Activated naive CD4-positive, alpha-beta T cell treated with anti-CD3 and anti-CD28 coated beads for 36 hours (primary cell): ENCODE measurements at regions of chr1 and their contacts with region 1.

Region 1: GRCh38 chr1:77533660-77534305 is 148.7 kb downstream of the ZZZ3 start:
- DNase-seq: peak; percentile 77
- H3K4me3 Mint-ChIP-seq: no peak overlapping the region
- H3K27ac Mint-ChIP-seq: peak overlapping the region; percentile 15
- H3K4me1 Mint-ChIP-seq: peaks cover 8% of the 10 kb centered on the region
- H3K27me3 Mint-ChIP-seq: no peaks in the 10 kb centered on the region

Region 2: DNA sequence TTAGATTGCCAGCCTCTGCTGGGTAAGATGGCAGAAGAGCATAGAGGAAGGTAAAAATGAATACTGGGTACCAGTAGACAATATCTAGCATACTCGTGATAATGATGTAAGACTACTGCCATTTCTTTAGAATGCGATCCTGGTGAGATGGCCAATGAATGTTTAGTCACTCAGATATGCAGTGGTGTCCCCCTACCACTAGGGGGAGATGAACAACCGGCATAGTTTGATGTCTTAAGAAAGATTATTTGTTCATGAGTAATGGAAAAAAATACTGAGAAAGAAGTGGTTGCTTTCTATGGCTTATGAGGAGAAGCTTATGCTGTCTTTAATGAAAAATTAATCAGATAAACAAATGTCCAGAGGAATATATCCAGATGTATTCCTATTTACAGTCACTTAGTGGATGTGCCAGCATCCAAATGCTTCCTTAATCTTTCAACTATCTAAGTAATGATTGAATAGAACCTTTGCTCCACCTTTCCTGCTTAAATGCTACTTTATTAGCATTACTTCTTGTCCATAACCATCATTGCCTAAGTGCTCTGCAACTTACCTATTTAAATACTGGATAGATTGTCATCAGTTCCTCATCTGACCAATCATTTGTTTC is 1202.7 kb before region 1 on chr1:
- CTCF ChIA-PET with region 1: no interaction called
- intact Hi-C with region 1: loop called (anchors 2 kb)
- DNase-seq: peak; percentile 68
- H3K4me3 Mint-ChIP-seq: no peak overlapping the region
- H3K27ac Mint-ChIP-seq: no peak overlapping the region
- H3K4me1 Mint-ChIP-seq: peaks cover 14% of the 10 kb centered on the region
- H3K27me3 Mint-ChIP-seq: no peaks in the 10 kb centered on the region

Region 3: GRCh38 chr1:77143529-77144121 is 390.2 kb before region 1 on chr1:
- CTCF ChIA-PET with region 1: interaction called, 7 read pairs
- intact Hi-C with region 1: loop called (anchors 1 kb)
- DNase-seq: no peak
- H3K4me3 Mint-ChIP-seq: no peak overlapping the region
- H3K27ac Mint-ChIP-seq: no peak overlapping the region
- H3K4me1 Mint-ChIP-seq: peaks cover 2% of the 10 kb centered on the region
- H3K27me3 Mint-ChIP-seq: no peaks in the 10 kb centered on the region

Region 4: GRCh38 chr1:77238462-77238861 is 295.3 kb before region 1 on chr1:
- CTCF ChIA-PET with region 1: interaction called, 12 read pairs
- intact Hi-C with region 1: no loop called
- DNase-seq: no peak
- H3K4me3 Mint-ChIP-seq: no peak overlapping the region
- H3K27ac Mint-ChIP-seq: no peak overlapping the region
- H3K4me1 Mint-ChIP-seq: peaks cover 5% of the 10 kb centered on the region
- H3K27me3 Mint-ChIP-seq: no peaks in the 10 kb centered on the region

Region 5: DNA sequence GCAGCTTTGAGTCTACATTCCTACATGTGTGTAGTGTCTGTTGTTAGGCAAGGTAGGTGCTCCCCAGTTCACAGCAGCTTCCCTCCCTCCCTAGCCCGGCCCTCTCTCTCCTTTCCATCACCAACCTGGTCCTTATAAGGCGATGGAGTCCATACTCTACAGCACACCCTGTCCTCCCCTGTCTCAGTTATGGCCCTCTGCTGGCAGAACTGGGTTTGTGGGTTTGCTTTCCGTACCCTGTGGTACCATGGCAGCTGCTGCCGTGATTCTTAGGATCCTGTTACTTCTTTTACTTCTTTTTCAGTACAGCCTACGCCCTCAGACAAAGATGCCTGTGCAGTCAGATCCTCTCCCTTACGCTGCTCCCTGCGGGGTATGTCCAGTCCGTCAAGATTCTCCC is 220.3 kb before region 1 on chr1:
- CTCF ChIA-PET with region 1: interaction called, 3 read pairs
- intact Hi-C with region 1: loop called (anchors 5 kb)
- DNase-seq: peak; percentile 59
- H3K4me3 Mint-ChIP-seq: no peak overlapping the region
- H3K27ac Mint-ChIP-seq: no peak overlapping the region
- H3K4me1 Mint-ChIP-seq: peaks cover 37% of the 10 kb centered on the region
- H3K27me3 Mint-ChIP-seq: no peaks in the 10 kb centered on the region

Region 6: DNA sequence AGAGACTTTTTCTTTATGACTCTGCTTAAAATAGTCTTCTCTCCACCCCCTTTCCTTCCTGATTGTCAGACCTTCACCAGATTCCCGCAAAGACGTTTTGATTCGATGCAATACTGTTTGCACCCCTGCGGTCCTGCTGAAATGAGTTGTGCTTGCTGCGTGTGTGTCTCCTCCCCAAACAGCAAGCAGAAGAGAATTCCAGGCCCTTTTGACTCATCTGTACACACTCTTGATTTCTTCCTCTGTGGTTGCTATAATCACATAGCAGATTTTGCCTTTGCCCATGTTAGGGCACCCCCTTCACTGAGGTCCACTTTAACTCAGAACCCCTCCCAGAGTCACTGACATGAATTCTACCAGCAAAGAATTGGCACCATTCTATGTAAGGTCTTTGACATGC is 12.2 kb after region 1 on chr1:
- CTCF ChIA-PET with region 1: interaction called, 12 read pairs
- intact Hi-C with region 1: no loop called
- DNase-seq: no peak
- H3K4me3 Mint-ChIP-seq: no peak overlapping the region
- H3K27ac Mint-ChIP-seq: no peak overlapping the region
- H3K4me1 Mint-ChIP-seq: no peaks in the 10 kb centered on the region
- H3K27me3 Mint-ChIP-seq: no peaks in the 10 kb centered on the region

Region 7: GRCh38 chr1:78114034-78114956 is 580.5 kb after region 1 on chr1:
- CTCF ChIA-PET with region 1: no interaction called
- intact Hi-C with region 1: loop called (anchors 2 kb)
- DNase-seq: peak; percentile 79
- H3K4me3 Mint-ChIP-seq: no peak overlapping the region
- H3K27ac Mint-ChIP-seq: no peak overlapping the region
- H3K4me1 Mint-ChIP-seq: peaks cover 8% of the 10 kb centered on the region
- H3K27me3 Mint-ChIP-seq: no peaks in the 10 kb centered on the region